ENCODE measurements at regions of chr2 and their contacts with region 1.

Region 1: GRCh38 chr2:224585205-224586088 is at the start of gene CUL3:
- DNase-seq: peak; percentile 99
- ATAC-seq: peak; percentile 89
- H3K4me3 Mint-ChIP-seq: peak within 1 kb of the TSS; percentile 96
- H3K27ac Mint-ChIP-seq: peak within 1 kb of the TSS; percentile 93
- H3K4me1 Mint-ChIP-seq: peaks cover 47% of the 10 kb centered on the region
- H3K27me3 Mint-ChIP-seq: no peaks in the 10 kb centered on the region
- CTCF ChIP-seq: no peak
- total RNA-seq, gene CUL3: 99.4 and 114 TPM in 2 replicates

Region 2: GRCh38 chr2:223944703-223945531 is 640.5 kb before region 1 on chr2 and contains the start of gene WDFY1:
- CTCF ChIA-PET with region 1: no interaction called
- POLR2A ChIA-PET with region 1: interaction called, 3 read pairs
- intact Hi-C with region 1: loop called (anchors 1 kb)
- DNase-seq: peak; percentile 80
- ATAC-seq: peak; percentile 94
- H3K4me3 Mint-ChIP-seq: peak within 1 kb of the TSS; percentile 95
- H3K27ac Mint-ChIP-seq: peak within 1 kb of the TSS; percentile 88
- H3K4me1 Mint-ChIP-seq: peaks cover 58% of the 10 kb centered on the region
- H3K27me3 Mint-ChIP-seq: no peaks in the 10 kb centered on the region
- CTCF ChIP-seq: no peak
- total RNA-seq, gene WDFY1: 67.2 and 77.0 TPM in 2 replicates

Region 3: GRCh38 chr2:224025874-224026273 is 559.6 kb before region 1 on chr2:
- CTCF ChIA-PET with region 1: no interaction called
- POLR2A ChIA-PET with region 1: no interaction called
- intact Hi-C with region 1: loop called (anchors 5 kb)
- DNase-seq: peak; percentile 27
- ATAC-seq: peak; percentile 99
- H3K4me3 Mint-ChIP-seq: peak overlapping the region; percentile 53
- H3K27ac Mint-ChIP-seq: peak overlapping the region; percentile 79
- H3K4me1 Mint-ChIP-seq: peaks cover 49% of the 10 kb centered on the region
- H3K27me3 Mint-ChIP-seq: no peaks in the 10 kb centered on the region
- CTCF ChIP-seq: no peak

Region 4: GRCh38 chr2:224058048-224058775 is 527.2 kb before region 1 on chr2:
- CTCF ChIA-PET with region 1: no interaction called
- POLR2A ChIA-PET with region 1: no interaction called
- intact Hi-C with region 1: no loop called
- DNase-seq: no peak
- ATAC-seq: no peak
- H3K4me3 Mint-ChIP-seq: no peak overlapping the region
- H3K27ac Mint-ChIP-seq: no peak overlapping the region
- H3K4me1 Mint-ChIP-seq: peaks cover 2% of the 10 kb centered on the region
- H3K27me3 Mint-ChIP-seq: peaks cover 12% of the 10 kb centered on the region
- CTCF ChIP-seq: no peak

Region 5: GRCh38 chr2:224601923-224602322 is 16.5 kb after region 1 on chr2:
- CTCF ChIA-PET with region 1: no interaction called
- POLR2A ChIA-PET with region 1: interaction called, 29 read pairs
- intact Hi-C with region 1: no loop called
- DNase-seq: no peak
- ATAC-seq: no peak
- H3K4me3 Mint-ChIP-seq: no peak overlapping the region
- H3K27ac Mint-ChIP-seq: no peak overlapping the region
- H3K4me1 Mint-ChIP-seq: peaks cover 14% of the 10 kb centered on the region
- H3K27me3 Mint-ChIP-seq: no peaks in the 10 kb centered on the region
- CTCF ChIP-seq: no peak

Region 6: DNA sequence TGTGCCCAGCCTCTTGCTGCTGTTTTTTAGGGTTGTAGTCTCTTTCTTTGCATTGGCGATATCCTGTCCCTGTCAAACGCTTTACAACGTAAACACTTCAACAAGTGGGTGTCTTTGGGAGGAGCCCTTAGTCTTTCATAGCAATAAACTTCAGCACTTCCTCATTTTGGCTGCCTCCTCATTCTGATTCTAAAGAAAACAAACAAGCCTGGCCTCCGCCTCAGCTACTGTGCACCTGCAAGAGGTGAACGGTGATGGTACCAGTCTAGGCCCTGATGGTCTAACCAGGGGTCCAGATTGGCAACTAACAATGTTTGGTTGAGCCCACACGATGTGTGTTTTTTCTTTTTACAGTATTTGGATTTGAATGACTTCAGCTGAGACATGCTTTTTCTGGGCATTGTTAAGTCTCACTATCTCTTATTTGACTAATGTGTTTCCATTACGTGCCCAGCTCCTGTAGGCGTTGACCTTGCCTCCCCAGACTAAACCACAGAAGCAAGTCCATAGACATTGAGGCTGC is 52.9 kb after region 1 on chr2:
- CTCF ChIA-PET with region 1: no interaction called
- POLR2A ChIA-PET with region 1: interaction called, 7 read pairs
- intact Hi-C with region 1: loop called (anchors 1 kb)
- DNase-seq: peak; percentile 30
- ATAC-seq: peak; percentile 85
- H3K4me3 Mint-ChIP-seq: peak overlapping the region; percentile 42
- H3K27ac Mint-ChIP-seq: peak overlapping the region; percentile 91
- H3K4me1 Mint-ChIP-seq: peaks cover 18% of the 10 kb centered on the region
- H3K27me3 Mint-ChIP-seq: no peaks in the 10 kb centered on the region
- CTCF ChIP-seq: no peak

Measured in activated B cell treated with CpG ODN at 0.5 μM for 24 hours (primary cell).